H1 (cell line): ENCODE measurements at regions of chr6 and their contacts with region 1.

Region 1: GRCh38 chr6:44161997-44162338 is 3.3 kb downstream of the CAPN11 start:
- DNase-seq: peak in 1 of 2 experiments; percentile 39
- H3K4me3 ChIP-seq: no peak overlapping the region
- H3K27ac ChIP-seq: no peak overlapping the region
- H3K4me1 ChIP-seq: peaks cover 0 to 18% (median 12%) of the 10 kb centered on the region in 4 experiments; a peak in 6 of 7 replicates
- H3K27me3 ChIP-seq: 0 out of 7 replicates have a peak, but pooled peaks cover 0 to 4% (median 0%) of the 10 kb centered on the region in 4 experiments
- CTCF ChIP-seq: no peak
- EP300 ChIP-seq: no peak
- POLR2A ChIP-seq: no peak
- RAD21 ChIP-seq: no peak

Region 2: DNA sequence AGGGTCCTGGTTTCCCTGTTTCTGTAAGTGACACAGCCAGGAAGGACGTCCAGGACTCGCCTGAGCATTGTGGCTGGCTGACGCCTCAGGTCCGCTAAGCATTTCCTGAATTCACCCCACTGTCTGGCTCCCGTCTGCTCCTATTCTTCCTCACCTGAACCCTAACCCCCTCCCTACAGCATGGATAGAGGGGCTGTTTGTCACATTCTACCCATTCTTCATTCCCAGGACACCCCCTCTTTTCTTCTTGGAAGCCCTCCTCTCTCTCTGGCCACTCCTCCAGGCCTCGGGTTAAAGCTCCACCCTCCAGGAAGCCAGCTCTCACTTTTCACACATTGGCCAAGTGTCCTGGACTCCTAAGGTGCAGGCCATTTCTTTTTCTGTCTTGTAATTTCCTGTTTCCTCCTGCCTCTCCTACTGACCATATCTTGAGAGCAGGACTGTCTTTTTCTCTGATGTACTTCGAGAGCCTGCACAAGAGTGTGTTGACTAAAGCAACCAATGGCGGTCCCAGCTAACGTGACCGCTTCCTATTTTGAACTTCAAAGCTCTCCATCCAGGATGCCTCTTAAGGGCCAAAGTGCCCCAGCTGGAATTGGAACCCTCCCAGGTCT is 30.6 kb after region 1 on chr6:
- CTCF ChIA-PET with region 1: no interaction called
- POLR2A ChIA-PET with region 1: no interaction called
- DNase-seq: no peak
- H3K4me3 ChIP-seq: no peak overlapping the region
- H3K27ac ChIP-seq: no peak overlapping the region
- H3K4me1 ChIP-seq: peaks cover 4 to 8% (median 4%) of the 10 kb centered on the region in 4 experiments; a peak in 6 of 7 replicates
- H3K27me3 ChIP-seq: no peaks in the 10 kb centered on the region; a peak in 1 of 7 replicates
- CTCF ChIP-seq: no peak
- EP300 ChIP-seq: no peak
- POLR2A ChIP-seq: no peak
- RAD21 ChIP-seq: no peak

Region 3: DNA sequence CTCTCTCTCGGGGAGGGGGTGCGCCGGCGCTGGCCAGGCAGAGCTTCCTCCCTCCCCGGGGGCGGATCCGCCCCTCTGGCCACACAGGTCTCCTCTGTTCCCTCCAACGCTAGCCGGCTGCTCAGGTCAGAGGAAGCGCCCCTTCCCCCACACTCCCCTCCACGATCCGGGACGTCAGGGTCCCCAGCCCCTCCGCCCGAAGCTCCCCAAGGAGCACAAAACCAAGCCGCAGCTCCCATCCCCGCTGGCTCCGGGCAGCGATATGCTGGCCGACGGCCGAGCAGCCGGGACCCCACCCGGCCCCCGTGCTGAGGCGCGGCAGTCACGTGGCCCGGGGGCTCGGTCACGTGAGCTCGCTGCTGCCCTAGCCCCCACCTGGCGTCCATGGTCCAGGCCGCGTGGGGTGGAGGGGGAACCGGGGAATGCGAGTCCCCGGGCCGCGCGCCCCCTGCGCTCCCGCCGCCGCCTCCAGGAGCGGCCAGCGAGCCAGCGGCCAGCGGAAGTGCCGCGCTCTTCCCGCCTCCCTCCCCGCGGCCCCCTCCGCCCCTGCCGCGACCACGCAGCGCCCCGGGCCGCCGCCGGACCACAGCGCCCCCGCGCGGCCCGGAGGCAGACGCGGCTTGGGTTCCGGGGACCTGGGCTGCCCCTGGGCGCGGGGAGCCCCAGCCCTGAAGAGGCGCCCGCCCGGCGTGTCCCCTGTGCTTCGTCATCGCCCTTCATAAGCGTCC is 95.2 kb after region 1 on chr6 and contains the start of gene SLC35B2:
- CTCF ChIA-PET with region 1: interaction called, 7 read pairs
- POLR2A ChIA-PET with region 1: interaction called, 12 read pairs
- DNase-seq: peak in 1 of 2 experiments; percentile 85
- H3K4me3 ChIP-seq: peak within 1 kb of the TSS; percentile 67 to 85 (median 75)
- H3K27ac ChIP-seq: peak within 1 kb of the TSS; percentile 88
- H3K4me1 ChIP-seq: peaks cover 1 to 20% (median 7%) of the 10 kb centered on the region in 4 experiments; a peak in 6 of 7 replicates
- H3K27me3 ChIP-seq: no peaks in the 10 kb centered on the region
- CTCF ChIP-seq: peak in 2 of 3 experiments; percentile 70 to 91; a peak in 3 of 4 replicates
- EP300 ChIP-seq: peak; percentile 21 to 23; a peak in 2 of 3 replicates
- POLR2A ChIP-seq: peak in 1 of 2 experiments; percentile 67; a peak in 1 of 3 replicates
- RAD21 ChIP-seq: peak; percentile 6 to 59; a peak in 3 of 4 replicates
- total RNA-seq, gene SLC35B2: 29.5 and 32.3 TPM in 2 replicates

Region 4: GRCh38 chr6:45138765-45139164 is 976.8 kb after region 1 on chr6:
- CTCF ChIA-PET with region 1: no interaction called
- POLR2A ChIA-PET with region 1: no interaction called
- DNase-seq: no peak
- H3K4me3 ChIP-seq: no peak overlapping the region
- H3K27ac ChIP-seq: no peak overlapping the region
- H3K4me1 ChIP-seq: no peaks in the 10 kb centered on the region
- H3K27me3 ChIP-seq: peaks cover 0 to 2% (median 0%) of the 10 kb centered on the region in 4 experiments; a peak in 1 of 7 replicates
- CTCF ChIP-seq: no peak
- EP300 ChIP-seq: no peak
- POLR2A ChIP-seq: no peak
- RAD21 ChIP-seq: no peak